Aorta (tissue), 5 donors: ENCODE measurements at regions of chr17 and their contacts with region 1.

Region 1: GRCh38 chr17:49637050-49637449 is 40.8 kb downstream of the SPOP start:
- DNase-seq: no peak
- ATAC-seq: peak; percentile 64
- H3K4me3 ChIP-seq: no peak overlapping the region
- H3K27ac ChIP-seq: peak overlapping the region; percentile 61 to 99
- H3K4me1 ChIP-seq: peaks cover 8 to 18% of the 10 kb centered on the region in 2 donors
- H3K27me3 ChIP-seq: no peaks in the 10 kb centered on the region

Region 2: GRCh38 chr17:49677933-49678847 is 41.1 kb after region 1 on chr17 and contains the start of gene SPOP:
- intact Hi-C with region 1: loop called in 1 of 2 experiments (anchors 5 kb)
- DNase-seq: peak; percentile 100
- ATAC-seq: peak; percentile 100
- H3K4me3 ChIP-seq: peak within 1 kb of the TSS; percentile 67 to 90
- H3K27ac ChIP-seq: peak within 1 kb of the TSS; percentile 23 to 95
- H3K4me1 ChIP-seq: peaks cover 0 to 3% of the 10 kb centered on the region in 2 donors
- H3K27me3 ChIP-seq: no peaks in the 10 kb centered on the region
- total RNA-seq, gene SPOP: 117 to 289 TPM

Region 3: GRCh38 chr17:49694847-49695683 is 58.0 kb after region 1 on chr17:
- intact Hi-C with region 1: loop called in 1 of 2 experiments (anchors 5 kb)
- DNase-seq: peak in 1 of 2 donors; percentile 86
- ATAC-seq: no peak
- H3K4me3 ChIP-seq: no peak overlapping the region
- H3K27ac ChIP-seq: peak overlapping the region in 1 of 2 donors; percentile 41
- H3K4me1 ChIP-seq: peaks cover 0 to 3% of the 10 kb centered on the region in 2 donors
- H3K27me3 ChIP-seq: no peaks in the 10 kb centered on the region